HEK293 (cell line): ENCODE measurements at regions of chr6 and their contacts with region 1.

Region 1: GRCh38 chr6:53986165-53986720 is 125.0 kb upstream of the MLIP start:
- H3K4me3 ChIP-seq: no peak overlapping the region
- H3K27ac ChIP-seq: no peak overlapping the region
- H3K4me1 ChIP-seq: 0 out of 2 replicates have a peak, but pooled peaks cover 3% of the 10 kb centered on the region
- CTCF ChIP-seq: peak; percentile 40; the same call in 1 of the 2 replicates

Region 2: GRCh38 chr6:53998303-53998702 is 12.1 kb after region 1 on chr6:
- CTCF ChIA-PET with region 1: interaction called, 57 read pairs
- POLR2A ChIA-PET with region 1: no interaction called
- H3K4me3 ChIP-seq: no peak overlapping the region
- H3K27ac ChIP-seq: no peak overlapping the region
- H3K4me1 ChIP-seq: no peaks in the 10 kb centered on the region
- CTCF ChIP-seq: no peak

Region 3: GRCh38 chr6:54041239-54041638 is 55.0 kb after region 1 on chr6:
- CTCF ChIA-PET with region 1: no interaction called
- POLR2A ChIA-PET with region 1: no interaction called
- H3K4me3 ChIP-seq: no peak overlapping the region
- H3K27ac ChIP-seq: no peak overlapping the region
- H3K4me1 ChIP-seq: no peaks in the 10 kb centered on the region
- CTCF ChIP-seq: no peak

Region 4: GRCh38 chr6:54100411-54101006 is 114.3 kb after region 1 on chr6:
- CTCF ChIA-PET with region 1: no interaction called
- POLR2A ChIA-PET with region 1: no interaction called
- H3K4me3 ChIP-seq: no peak overlapping the region
- H3K27ac ChIP-seq: no peak overlapping the region
- H3K4me1 ChIP-seq: no peaks in the 10 kb centered on the region
- CTCF ChIP-seq: no peak

Region 5: DNA sequence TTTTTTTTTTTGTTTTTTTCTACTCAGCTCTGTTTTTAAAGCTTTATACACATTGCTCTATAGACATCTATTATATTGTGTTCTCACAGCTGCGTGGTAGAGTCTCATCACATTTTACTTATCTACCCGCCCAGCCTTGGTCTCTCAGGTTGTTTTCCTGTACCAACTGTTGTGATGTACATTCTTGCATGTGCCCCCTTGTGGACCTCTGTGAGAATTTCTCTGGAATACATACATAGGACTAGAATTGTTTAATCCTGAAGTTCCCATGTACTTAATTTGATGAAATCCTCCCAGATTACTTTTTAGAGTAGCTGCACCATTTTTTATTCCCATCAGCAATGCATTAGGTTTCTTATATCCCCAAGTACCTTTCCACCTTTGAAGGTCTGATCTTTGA is 281.6 kb after region 1 on chr6:
- CTCF ChIA-PET with region 1: interaction called, 141 read pairs
- POLR2A ChIA-PET with region 1: no interaction called
- H3K4me3 ChIP-seq: no peak overlapping the region
- H3K27ac ChIP-seq: no peak overlapping the region
- H3K4me1 ChIP-seq: no peaks in the 10 kb centered on the region
- CTCF ChIP-seq: no peak

Region 6: DNA sequence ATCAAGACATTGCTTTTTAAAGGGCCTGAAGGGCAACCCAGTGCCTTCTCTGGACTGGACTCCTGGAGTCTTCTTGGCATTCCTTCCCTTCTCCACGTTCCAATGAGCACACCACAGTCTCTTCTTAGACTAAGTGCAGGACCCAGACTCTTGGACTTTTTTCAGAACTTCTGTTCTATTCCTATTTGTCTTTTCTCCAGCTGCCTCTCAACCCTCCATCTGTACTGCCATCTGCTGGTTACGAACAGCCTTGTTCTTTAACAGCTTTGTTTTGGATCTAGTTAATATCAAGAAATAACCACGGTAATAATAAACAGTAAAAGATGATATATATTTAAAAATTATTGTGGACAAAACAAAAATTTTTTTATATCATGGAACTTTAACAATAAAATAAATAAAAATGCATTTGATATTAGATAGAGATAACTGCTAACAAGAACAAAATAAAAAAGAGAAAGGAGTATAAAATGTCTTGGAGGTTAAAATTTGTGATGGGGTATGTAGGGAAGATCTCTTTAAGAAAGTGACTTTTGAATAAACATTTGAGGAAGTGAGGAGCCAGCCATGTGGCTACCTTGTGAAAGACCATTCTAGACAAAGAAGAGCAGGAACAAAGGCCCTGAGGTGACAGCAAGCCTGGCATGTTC is 1083.0 kb after region 1 on chr6:
- CTCF ChIA-PET with region 1: interaction called, 16 read pairs
- POLR2A ChIA-PET with region 1: no interaction called
- H3K4me3 ChIP-seq: no peak overlapping the region
- H3K27ac ChIP-seq: no peak overlapping the region
- H3K4me1 ChIP-seq: no peaks in the 10 kb centered on the region
- CTCF ChIP-seq: no peak